Heart right ventricle (tissue), 16 donors: ENCODE measurements at regions of chr5 and their contacts with region 1.

Region 1: GRCh38 chr5:134845852-134846640 is at the start of gene C5orf24:
- DNase-seq: peak; percentile 94 to 96
- ATAC-seq: peak; percentile 98 to 99 (median 99)
- H3K4me3 ChIP-seq: peak within 1 kb of the TSS; percentile 61 to 98 (median 77)
- H3K27ac ChIP-seq: peak within 1 kb of the TSS; percentile 89 to 99 (median 96)
- H3K4me1 ChIP-seq: peaks cover 14 to 51% (median 40%) of the 10 kb centered on the region in 9 donors
- H3K27me3 ChIP-seq: no peaks in the 10 kb centered on the region
- CTCF ChIP-seq: no peak
- total RNA-seq, gene C5orf24: 20.6 to 31.2 (median 23.5) TPM

Region 2: GRCh38 chr5:134738133-134738962 is 107.7 kb before region 1 on chr5 and contains the start of gene CAMLG:
- intact Hi-C with region 1: loop called in 1 of 10 experiments (anchors 2 kb)
- DNase-seq: peak; percentile 98
- ATAC-seq: peak; percentile 99 to 100 (median 100)
- H3K4me3 ChIP-seq: peak within 1 kb of the TSS; percentile 64 to 95 (median 80)
- H3K27ac ChIP-seq: peak within 1 kb of the TSS; percentile 70 to 96 (median 90)
- H3K4me1 ChIP-seq: peaks cover 0 to 38% (median 15%) of the 10 kb centered on the region in 9 donors
- H3K27me3 ChIP-seq: no peaks in the 10 kb centered on the region
- CTCF ChIP-seq: peak; percentile 18 to 78 (median 66)
- total RNA-seq, gene CAMLG: 14.6 to 22.1 (median 18.1) TPM

Region 3: DNA sequence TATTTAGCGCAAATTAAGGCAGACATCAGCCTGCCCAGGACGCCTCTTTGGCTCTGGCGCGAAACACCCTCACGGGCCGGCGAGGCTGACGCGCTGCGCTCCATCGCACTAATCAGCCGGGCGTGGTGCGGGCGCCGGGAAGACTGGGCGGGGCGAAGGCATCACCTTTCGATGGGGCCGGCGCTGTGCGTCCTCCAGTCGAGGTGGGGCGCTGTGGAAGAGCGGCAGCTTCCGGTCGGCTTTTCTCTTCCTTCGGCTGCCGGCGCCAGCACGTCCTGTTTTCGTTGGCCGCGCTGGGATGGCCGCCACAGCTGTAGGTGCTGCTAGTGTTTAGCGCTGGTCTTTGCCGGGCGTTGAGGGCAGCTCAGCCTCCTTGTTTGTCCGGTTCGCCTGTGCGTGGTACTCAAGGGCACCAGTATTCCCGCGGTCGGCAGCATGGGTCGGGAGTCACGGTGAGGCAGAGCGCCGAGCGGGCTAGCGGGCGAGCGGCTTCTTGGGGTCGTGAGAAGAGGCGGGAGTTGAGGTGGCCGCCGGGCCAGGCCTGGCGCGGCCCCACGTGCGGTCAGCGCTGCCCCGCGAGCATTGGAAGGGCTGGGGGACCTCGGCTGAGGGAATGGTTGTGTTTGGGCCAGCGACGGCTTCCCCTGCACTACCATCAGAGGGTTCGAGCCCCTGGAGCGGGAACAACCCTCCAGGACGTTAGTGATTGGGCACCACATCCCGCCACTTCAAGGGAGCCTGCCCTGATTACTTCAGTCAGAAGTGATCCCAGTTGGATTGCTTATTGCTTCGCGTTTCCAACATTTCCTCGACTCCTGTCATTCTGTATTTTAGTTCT is 87.3 kb before region 1 on chr5 and contains the start of gene DDX46:
- intact Hi-C with region 1: loop called in 1 of 10 experiments (anchors 5 kb)
- DNase-seq: peak; percentile 93 to 94
- ATAC-seq: peak; percentile 97 to 100 (median 99)
- H3K4me3 ChIP-seq: peak within 1 kb of the TSS; percentile 66 to 99 (median 88)
- H3K27ac ChIP-seq: peak within 1 kb of the TSS in 9 of 10 donors; percentile 63 to 90 (median 76)
- H3K4me1 ChIP-seq: peaks cover 3 to 34% (median 24%) of the 10 kb centered on the region in 9 donors
- H3K27me3 ChIP-seq: no peaks in the 10 kb centered on the region
- CTCF ChIP-seq: peak; percentile 43 to 95 (median 77)
- total RNA-seq, gene DDX46: 26.1 to 34.8 (median 29.7) TPM

Region 4: GRCh38 chr5:134784241-134784920 is 61.7 kb before region 1 on chr5:
- intact Hi-C with region 1: no loop called
- DNase-seq: no peak
- ATAC-seq: no peak
- H3K4me3 ChIP-seq: no peak overlapping the region
- H3K27ac ChIP-seq: no peak overlapping the region
- H3K4me1 ChIP-seq: no peaks in the 10 kb centered on the region
- H3K27me3 ChIP-seq: no peaks in the 10 kb centered on the region
- CTCF ChIP-seq: peak in 2 of 9 donors; percentile 6 to 11

Region 5: DNA sequence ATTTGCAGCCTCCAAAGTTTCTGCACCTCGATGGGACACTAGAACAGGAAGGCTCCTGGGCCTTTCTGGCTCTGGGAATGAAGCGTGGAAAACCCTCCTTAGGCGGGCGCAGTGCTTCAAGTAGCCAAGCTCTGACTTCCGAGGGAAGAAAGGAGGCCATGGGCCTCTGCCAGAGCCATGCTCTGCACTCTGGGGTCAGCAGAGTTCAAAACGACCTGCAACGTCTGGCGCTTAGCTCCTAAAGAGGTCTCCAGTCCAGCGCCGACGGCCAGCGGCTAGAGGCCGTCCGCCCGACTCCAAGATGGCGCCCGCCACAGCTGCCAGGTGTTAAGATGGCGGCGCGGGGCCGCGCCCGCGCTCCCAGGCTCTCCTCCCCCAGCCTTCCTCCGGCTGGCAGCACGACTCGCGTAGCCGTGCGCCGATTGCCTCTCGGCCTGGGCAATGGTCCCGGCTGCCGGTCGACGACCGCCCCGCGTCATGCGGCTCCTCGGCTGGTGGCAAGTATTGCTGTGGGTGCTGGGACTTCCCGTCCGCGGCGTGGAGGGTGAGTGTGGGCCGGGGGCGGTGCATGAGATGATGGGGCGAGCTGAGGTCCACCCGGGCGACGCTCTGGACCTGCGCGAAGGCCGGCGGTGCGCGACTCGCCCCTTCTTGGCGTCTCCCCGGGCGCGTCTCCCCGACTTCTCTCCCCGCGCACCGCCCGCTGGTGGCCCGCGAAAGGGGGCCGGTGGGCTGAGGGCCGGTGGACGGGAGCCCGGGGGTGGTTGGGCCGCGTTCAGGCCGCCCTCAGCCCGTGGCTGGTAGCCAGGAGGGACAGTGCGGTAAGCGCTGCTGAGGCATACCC is 28.2 kb after region 1 on chr5 and contains the start of gene TXNDC15:
- intact Hi-C with region 1: loop called in 2 of 10 experiments (anchors 1 to 2 kb)
- DNase-seq: peak; percentile 89 to 90
- ATAC-seq: peak; percentile 96 to 98 (median 97)
- H3K4me3 ChIP-seq: peak within 1 kb of the TSS; percentile 64 to 98 (median 86)
- H3K27ac ChIP-seq: peak within 1 kb of the TSS; percentile 92 to 99 (median 96)
- H3K4me1 ChIP-seq: peaks cover 3 to 35% (median 21%) of the 10 kb centered on the region in 9 donors
- H3K27me3 ChIP-seq: no peaks in the 10 kb centered on the region
- CTCF ChIP-seq: no peak
- total RNA-seq, gene TXNDC15: 37.5 to 72.0 (median 51.1) TPM

Region 6: DNA sequence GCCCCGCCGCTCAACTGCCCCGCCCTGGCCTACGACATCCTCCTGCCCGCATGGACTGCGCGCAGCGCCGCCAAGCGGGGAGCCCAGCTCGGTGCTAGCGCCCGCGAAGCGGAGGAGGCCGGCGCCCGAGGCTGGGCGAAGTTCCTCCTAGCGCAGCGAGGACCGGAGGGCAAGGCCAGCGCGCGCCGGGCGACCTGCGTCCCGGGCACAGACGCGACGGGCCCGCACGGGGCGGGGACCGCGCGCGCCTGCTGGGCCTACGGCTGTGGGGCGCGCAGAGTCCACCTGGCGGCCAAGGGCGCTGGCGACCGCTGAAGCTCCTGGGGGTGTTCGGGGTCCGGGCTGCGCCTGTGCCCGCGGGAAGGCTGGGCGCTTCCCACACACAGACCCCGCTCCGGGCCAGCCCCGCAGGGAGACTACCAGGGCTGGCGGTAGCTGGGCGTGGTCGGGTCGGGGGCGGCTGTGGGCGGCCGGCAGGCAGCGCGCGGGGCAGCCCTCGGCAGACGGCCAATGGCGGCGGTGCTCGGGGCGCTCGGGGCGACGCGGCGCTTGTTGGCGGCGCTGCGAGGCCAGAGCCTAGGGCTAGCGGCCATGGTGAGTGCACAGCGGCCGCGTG is 58.7 kb after region 1 on chr5 and contains the start of gene PCBD2:
- intact Hi-C with region 1: loop called in 7 of 10 experiments (anchors 2 to 10 kb)
- DNase-seq: peak; percentile 91 to 94
- ATAC-seq: peak; percentile 93 to 96 (median 94)
- H3K4me3 ChIP-seq: peak within 1 kb of the TSS; percentile 43 to 93 (median 74)
- H3K27ac ChIP-seq: peak within 1 kb of the TSS; percentile 97 to 100 (median 100)
- H3K4me1 ChIP-seq: peaks cover 0 to 26% (median 6%) of the 10 kb centered on the region in 9 donors
- H3K27me3 ChIP-seq: no peaks in the 10 kb centered on the region
- CTCF ChIP-seq: peak; percentile 78 to 96 (median 92)
- total RNA-seq, gene PCBD2: 15.9 to 36.4 (median 26.8) TPM